Sciatic nerve (tissue), 2 donors: ENCODE measurements at regions of chr20 and their contacts with region 1.

Region 1: GRCh38 chr20:53099856-53100255 is 127.7 kb downstream of the TSHZ2 start:
- DNase-seq: no peak
- ATAC-seq: no peak

Region 2: DNA sequence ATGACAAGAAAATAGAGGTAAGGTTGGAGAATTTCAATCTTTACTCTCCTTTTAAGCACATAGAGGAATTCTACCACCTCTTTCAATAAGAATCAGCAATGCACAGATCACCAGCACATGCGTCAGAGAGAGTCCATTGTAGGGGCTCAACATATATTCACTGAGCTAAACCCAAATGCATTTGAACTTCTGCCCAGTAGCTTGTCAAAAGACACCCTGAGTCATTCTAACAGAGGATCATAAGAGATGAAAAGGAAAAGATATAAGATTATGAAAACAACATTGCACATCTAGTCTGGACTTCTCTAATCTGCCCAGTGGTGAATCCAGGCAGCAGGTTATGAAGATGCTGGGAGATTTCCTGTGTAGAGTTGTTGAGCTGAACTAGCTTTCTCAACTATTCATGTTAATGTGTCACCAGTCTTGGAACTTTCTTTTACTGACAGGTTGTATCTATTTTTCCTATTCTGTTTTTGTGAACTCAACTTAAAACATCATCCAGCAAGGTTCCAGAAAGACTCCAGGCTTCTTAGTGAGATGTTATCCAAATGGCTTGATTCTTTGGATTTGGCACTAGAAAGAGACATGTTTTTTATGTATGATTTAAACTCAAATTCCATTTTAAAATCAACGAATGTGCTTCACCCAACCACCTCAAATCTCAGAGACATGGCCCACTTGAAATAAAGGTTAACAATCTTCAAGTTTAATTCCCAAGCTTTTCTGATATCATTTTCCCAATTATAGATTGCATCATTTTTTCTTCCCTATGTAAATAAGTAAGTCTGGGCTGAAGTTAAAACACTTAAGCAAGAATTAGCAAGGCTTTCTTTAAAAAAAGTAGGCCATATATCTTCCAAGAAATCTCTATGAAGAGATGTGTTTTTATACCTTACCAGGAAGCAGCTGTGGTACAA is 38.4 kb before region 1 on chr20:
- intact Hi-C with region 1: no loop called
- DNase-seq: no peak
- ATAC-seq: no peak

Region 3: DNA sequence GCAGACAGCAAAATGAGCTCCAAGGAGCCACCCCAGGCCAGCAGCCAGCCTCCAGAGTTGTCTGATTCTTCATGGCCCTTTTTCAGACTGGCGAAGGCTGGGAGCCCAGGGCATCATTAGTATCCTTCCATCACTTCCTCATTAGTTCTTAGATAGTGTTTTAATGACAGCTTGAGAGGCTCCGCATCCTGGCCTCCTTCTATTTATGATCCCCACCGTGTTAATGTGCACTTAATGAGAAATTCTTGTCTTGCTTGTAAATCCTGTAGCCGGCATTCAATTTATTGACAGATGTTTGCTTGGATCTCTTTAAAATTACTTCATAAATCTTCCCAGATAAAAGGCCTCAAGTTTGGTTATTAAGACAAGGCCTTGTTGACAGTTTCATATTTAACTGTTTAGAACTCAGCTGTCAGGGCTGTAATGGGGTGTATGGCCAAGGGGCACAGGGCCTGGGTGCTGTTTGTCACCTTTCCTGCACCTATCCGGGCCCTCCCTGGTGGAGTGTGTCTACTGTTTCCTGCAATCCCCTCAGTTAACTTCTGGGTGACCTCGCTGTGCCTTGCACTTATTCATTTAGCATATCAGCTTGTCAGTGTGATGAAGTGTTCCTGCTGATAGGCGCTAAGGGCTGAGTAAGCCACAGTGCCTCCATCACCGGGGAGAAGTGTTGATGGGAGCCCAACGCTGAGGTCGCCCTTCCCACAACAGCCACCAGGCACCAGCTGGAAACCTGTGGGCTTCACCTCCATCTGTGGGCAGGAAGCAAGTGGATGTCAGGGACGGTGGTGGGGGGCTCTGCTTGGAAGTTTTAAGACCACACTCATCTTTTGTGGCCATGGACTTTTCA is 41.6 kb after region 1 on chr20:
- intact Hi-C with region 1: loop called (anchors 1 kb)
- DNase-seq: no peak
- ATAC-seq: no peak

Region 4: DNA sequence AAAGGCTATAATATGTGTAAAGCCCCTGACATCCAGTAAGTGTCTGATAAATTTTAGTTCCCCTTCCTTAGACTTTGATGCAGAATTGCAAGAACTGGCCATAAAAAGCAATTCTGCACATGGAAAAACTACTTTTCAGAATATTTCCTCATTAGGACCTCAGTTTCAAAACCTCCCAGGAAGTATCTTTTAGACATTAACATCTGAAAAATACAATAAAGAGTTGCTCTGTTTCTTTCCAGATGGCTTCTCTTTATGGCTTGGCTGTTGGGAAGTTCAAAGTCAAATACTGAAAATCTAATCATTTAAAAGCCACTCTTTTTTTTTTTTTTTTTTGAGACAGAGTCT is 600.1 kb after region 1 on chr20:
- intact Hi-C with region 1: no loop called
- DNase-seq: no peak
- ATAC-seq: peak; percentile 30